ENCODE measurements at regions of chr3 and their contacts with region 1.

Region 1: DNA sequence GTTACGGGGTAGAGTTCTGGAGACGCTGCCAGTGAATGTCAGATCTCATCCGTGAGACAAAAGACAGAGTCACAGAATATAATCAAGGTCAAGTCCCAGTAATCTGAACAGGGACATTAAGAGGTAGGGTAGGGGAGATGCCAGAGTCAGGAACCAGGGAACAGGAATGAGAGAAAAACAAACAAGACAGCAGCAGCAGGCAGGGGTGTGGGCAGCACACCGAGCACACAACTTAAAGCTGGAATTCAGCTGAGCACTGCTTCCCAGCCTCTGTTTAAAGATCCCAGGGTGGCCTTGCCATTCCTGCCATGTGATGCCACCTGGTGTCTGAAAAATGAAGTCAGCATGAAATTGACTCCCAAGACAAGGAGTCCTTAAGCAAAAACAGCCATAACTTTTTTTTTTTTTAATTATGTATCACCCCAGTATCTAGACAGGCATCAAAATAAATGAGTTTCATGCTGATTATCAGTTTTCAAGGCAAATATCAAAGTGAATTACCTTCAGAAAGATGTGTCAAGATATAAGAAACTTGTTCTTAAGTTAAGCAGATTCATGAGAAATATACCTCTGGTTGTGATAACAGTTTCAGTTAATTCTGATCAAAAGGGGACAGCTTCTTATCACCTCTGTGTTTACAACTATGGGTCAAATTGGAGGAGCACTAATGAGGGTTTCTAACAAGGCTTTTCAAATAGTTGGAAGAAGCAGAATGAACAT is 203.7 kb downstream of the SLC9A9 start:
- DNase-seq: peak; percentile 73
- H3K4me3 ChIP-seq: no peak overlapping the region
- H3K27ac ChIP-seq: no peak overlapping the region
- H3K4me1 ChIP-seq: no peaks in the 10 kb centered on the region
- H3K27me3 ChIP-seq: no peaks in the 10 kb centered on the region
- CTCF ChIP-seq: peak; percentile 50 to 81 (median 64)
- POLR2A ChIP-seq: no peak

Region 2: GRCh38 chr3:142896201-142896755 is 748.3 kb before region 1 on chr3:
- intact Hi-C with region 1: no loop called
- DNase-seq: no peak
- H3K4me3 ChIP-seq: no peak overlapping the region
- H3K27ac ChIP-seq: no peak overlapping the region
- H3K4me1 ChIP-seq: no peaks in the 10 kb centered on the region
- H3K27me3 ChIP-seq: no peaks in the 10 kb centered on the region
- CTCF ChIP-seq: no peak
- POLR2A ChIP-seq: no peak

Region 3: GRCh38 chr3:143601723-143602484 is 42.6 kb before region 1 on chr3:
- intact Hi-C with region 1: loop called (anchors 5 kb)
- DNase-seq: peak; percentile 86
- H3K4me3 ChIP-seq: no peak overlapping the region
- H3K27ac ChIP-seq: no peak overlapping the region
- H3K4me1 ChIP-seq: no peaks in the 10 kb centered on the region
- H3K27me3 ChIP-seq: no peaks in the 10 kb centered on the region
- CTCF ChIP-seq: peak in 1 of 4 experiments; percentile 5
- POLR2A ChIP-seq: no peak

Region 4: GRCh38 chr3:143707848-143708247 is 63.3 kb after region 1 on chr3:
- intact Hi-C with region 1: no loop called
- DNase-seq: no peak
- H3K4me3 ChIP-seq: no peak overlapping the region
- H3K27ac ChIP-seq: no peak overlapping the region
- H3K4me1 ChIP-seq: no peaks in the 10 kb centered on the region
- H3K27me3 ChIP-seq: no peaks in the 10 kb centered on the region
- CTCF ChIP-seq: no peak
- POLR2A ChIP-seq: no peak

Measured in prostate gland (tissue), 2 donors.